ENCODE measurements at regions of chr16 and their contacts with region 1.

Region 1: DNA sequence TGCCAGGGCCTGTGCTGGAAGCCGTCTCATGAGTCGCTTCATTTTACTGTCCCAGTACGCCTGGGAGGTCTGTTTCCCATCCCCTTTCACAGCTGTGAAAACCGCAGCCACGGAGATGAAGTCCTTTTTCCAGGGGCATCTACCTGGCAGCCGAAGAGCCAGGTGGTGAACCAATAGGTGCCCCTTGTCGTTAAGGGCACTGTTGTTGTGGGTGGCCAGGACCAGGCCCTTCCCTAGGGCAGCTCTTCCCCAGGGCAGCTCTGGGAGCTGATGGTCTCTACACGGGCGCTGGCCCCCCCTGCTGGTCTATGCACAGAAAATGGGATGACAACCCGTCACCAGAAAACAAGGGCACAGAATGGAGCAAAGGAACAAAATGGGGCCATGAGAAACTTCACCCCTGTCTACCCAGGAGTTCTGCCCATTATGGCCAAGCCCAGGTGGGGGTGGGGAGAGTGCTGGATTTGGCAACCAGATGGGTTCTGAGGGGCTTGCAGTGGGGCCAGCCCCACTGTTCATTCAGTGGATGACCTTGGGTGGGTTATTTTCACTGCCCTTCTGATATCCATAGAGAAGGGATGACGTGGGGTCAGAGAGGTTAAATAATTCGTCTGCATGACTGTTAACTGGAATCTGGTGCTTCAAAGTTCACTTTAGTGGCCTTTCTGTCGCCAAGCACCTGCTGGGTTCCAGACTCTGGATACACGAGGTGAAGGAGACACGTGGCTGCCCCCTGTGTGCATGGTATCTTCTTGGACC is 11.5 kb downstream of the RMI2 start:
- DNase-seq: peak; percentile 71
- H3K4me3 Mint-ChIP-seq: no peak overlapping the region
- H3K27ac Mint-ChIP-seq: no peak overlapping the region
- H3K4me1 Mint-ChIP-seq: peaks cover 47% of the 10 kb centered on the region
- H3K27me3 Mint-ChIP-seq: no peaks in the 10 kb centered on the region
- CTCF ChIP-seq: no peak

Region 2: DNA sequence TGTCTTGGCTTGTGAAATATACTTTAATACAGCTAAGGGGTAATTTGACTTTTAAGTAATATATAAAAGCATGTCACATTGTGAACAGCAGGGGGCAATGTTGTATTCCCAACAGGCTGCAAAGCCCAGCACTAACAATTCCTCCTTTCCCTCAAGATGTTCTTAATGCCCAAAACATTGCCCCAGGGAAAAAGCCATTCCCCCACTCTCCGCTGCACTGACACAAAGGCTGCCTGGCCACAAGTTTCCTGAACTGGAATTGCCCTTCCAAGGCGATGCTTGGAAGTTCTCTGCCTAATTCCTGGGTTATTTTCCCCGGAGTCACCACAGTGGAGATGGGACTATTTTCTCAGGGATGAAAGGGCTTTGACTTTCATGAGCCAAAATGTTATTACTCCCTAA is 385.2 kb before region 1 on chr16:
- CTCF ChIA-PET with region 1: no interaction called
- intact Hi-C with region 1: loop called (anchors 5 kb)
- DNase-seq: peak; percentile 64
- H3K4me3 Mint-ChIP-seq: no peak overlapping the region
- H3K27ac Mint-ChIP-seq: no peak overlapping the region
- H3K4me1 Mint-ChIP-seq: peaks cover 12% of the 10 kb centered on the region
- H3K27me3 Mint-ChIP-seq: no peaks in the 10 kb centered on the region
- CTCF ChIP-seq: peak; percentile 83